H1 (cell line): ENCODE measurements at regions of chr3 and their contacts with region 1.

Region 1: GRCh38 chr3:17412950-17413530 is 329.4 kb downstream of the TBC1D5 start:
- DNase-seq: no peak
- H3K4me3 ChIP-seq: no peak overlapping the region
- H3K27ac ChIP-seq: no peak overlapping the region
- H3K4me1 ChIP-seq: no peaks in the 10 kb centered on the region
- H3K27me3 ChIP-seq: no peaks in the 10 kb centered on the region
- CTCF ChIP-seq: peak in 2 of 3 experiments; percentile 72 to 84; a peak in 3 of 4 replicates
- EP300 ChIP-seq: no peak
- POLR2A ChIP-seq: no peak
- RAD21 ChIP-seq: peak; percentile 84 to 90

Region 2: GRCh38 chr3:17258823-17259436 is 154.1 kb before region 1 on chr3:
- CTCF ChIA-PET with region 1: interaction called, 10 read pairs
- POLR2A ChIA-PET with region 1: no interaction called
- DNase-seq: no peak
- H3K4me3 ChIP-seq: no peak overlapping the region
- H3K27ac ChIP-seq: no peak overlapping the region
- H3K4me1 ChIP-seq: peaks cover 0 to 2% (median 0%) of the 10 kb centered on the region in 4 experiments; a peak in 1 of 7 replicates
- H3K27me3 ChIP-seq: no peaks in the 10 kb centered on the region
- CTCF ChIP-seq: peak in 2 of 3 experiments; percentile 25 to 59; a peak in 2 of 4 replicates
- EP300 ChIP-seq: no peak
- POLR2A ChIP-seq: no peak
- RAD21 ChIP-seq: peak; percentile 69 to 78

Region 3: DNA sequence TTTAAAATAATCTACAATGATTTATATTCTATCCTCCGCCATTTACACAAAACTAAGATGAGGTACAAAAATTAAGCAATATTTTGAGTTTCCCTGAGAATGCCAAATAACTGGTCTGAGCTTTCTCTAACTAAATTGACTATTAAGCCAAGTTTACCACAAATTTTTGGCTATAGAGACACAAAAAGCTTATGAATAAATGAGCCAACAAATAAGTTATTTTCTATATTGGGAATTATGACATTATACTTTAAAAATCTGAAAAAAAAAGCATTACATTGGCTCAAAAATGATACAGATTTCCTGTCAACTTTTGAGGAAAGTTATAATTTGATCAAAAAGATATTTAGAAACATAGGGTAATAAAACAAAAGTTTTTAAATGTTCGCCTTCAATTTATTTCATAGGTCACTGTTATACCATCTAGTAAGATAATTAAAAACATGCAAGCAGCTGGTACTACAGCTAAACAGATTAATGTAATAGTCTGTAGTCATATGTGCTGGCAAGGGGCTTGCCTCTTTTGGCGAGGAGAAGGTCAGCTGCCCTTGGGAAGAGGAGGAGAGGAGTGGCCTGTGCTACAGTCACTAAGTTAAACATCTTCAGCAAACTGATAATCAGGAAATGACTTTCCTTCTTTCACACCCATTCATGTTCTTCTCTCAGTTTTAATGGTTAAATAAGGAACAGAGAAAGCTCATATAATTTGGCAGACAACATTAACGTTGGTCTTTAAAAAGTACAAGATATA is 10.9 kb after region 1 on chr3:
- CTCF ChIA-PET with region 1: interaction called, 15 read pairs
- POLR2A ChIA-PET with region 1: no interaction called
- DNase-seq: no peak
- H3K4me3 ChIP-seq: no peak overlapping the region
- H3K27ac ChIP-seq: no peak overlapping the region
- H3K4me1 ChIP-seq: no peaks in the 10 kb centered on the region
- H3K27me3 ChIP-seq: no peaks in the 10 kb centered on the region
- CTCF ChIP-seq: no peak
- EP300 ChIP-seq: no peak
- POLR2A ChIP-seq: no peak
- RAD21 ChIP-seq: no peak

Region 4: GRCh38 chr3:17442332-17443049 is 29.5 kb after region 1 on chr3:
- CTCF ChIA-PET with region 1: no interaction called
- POLR2A ChIA-PET with region 1: no interaction called
- DNase-seq: no peak
- H3K4me3 ChIP-seq: no peak overlapping the region
- H3K27ac ChIP-seq: no peak overlapping the region
- H3K4me1 ChIP-seq: no peaks in the 10 kb centered on the region
- H3K27me3 ChIP-seq: no peaks in the 10 kb centered on the region
- CTCF ChIP-seq: no peak
- EP300 ChIP-seq: no peak
- POLR2A ChIP-seq: no peak
- RAD21 ChIP-seq: no peak